Activated T-helper 1 cell treated with anti-CD3 and anti-CD28 coated beads, Interleukin-12 subunit alpha, Interleukin-12 subunit beta, Interleukin-2, Interleukin-4 antibody, amounts not matched to agents 30 ng/mL and 10 ng/mL and 1 ng/mL, durations not matched to agents 14 hours and 24 hours and 36 hours (primary cell): ENCODE measurements at regions of chrX and their contacts with region 1.

Region 1: GRCh38 chrX:97399400-97399799 is 515.7 kb downstream of the RPA4 start:
- DNase-seq: no peak
- H3K4me3 Mint-ChIP-seq: peak overlapping the region; percentile 33
- H3K27ac Mint-ChIP-seq: peak overlapping the region; percentile 86
- H3K4me1 Mint-ChIP-seq: peaks cover 50% of the 10 kb centered on the region
- H3K27me3 Mint-ChIP-seq: no peaks in the 10 kb centered on the region

Region 2: GRCh38 chrX:97026406-97026805 is 373.0 kb before region 1 on chrX:
- intact Hi-C with region 1: loop called (anchors 5 kb)
- DNase-seq: no peak
- H3K4me3 Mint-ChIP-seq: no peak overlapping the region
- H3K27ac Mint-ChIP-seq: no peak overlapping the region
- H3K4me1 Mint-ChIP-seq: no peaks in the 10 kb centered on the region
- H3K27me3 Mint-ChIP-seq: no peaks in the 10 kb centered on the region

Region 3: DNA sequence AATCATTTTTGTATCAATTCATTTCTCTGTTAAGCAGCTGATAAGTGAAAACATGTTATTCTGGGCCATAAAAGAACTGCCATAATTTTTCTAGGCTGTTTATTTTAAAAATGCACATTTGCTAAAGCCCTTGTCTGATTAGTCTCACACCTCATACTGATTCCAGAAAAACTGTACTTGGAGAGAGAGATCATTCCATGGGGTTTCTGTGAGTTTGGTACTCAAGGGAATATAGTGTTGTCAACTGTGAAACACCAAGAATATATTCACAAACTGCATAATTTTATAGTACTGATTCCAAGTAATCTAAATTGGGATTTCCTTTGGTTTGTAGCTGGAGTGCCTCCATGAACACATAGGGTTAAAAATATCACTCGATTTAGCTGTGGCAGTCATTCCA is 31.9 kb after region 1 on chrX:
- intact Hi-C with region 1: loop called (anchors 5 kb)
- DNase-seq: no peak
- H3K4me3 Mint-ChIP-seq: no peak overlapping the region
- H3K27ac Mint-ChIP-seq: no peak overlapping the region
- H3K4me1 Mint-ChIP-seq: no peaks in the 10 kb centered on the region
- H3K27me3 Mint-ChIP-seq: no peaks in the 10 kb centered on the region

Region 4: GRCh38 chrX:97494756-97495372 is 95.5 kb after region 1 on chrX:
- intact Hi-C with region 1: loop called (anchors 1 kb)
- DNase-seq: no peak
- H3K4me3 Mint-ChIP-seq: no peak overlapping the region
- H3K27ac Mint-ChIP-seq: no peak overlapping the region
- H3K4me1 Mint-ChIP-seq: no peaks in the 10 kb centered on the region
- H3K27me3 Mint-ChIP-seq: no peaks in the 10 kb centered on the region

Region 5: GRCh38 chrX:97597954-97598353 is 198.6 kb after region 1 on chrX:
- intact Hi-C with region 1: loop called (anchors 5 kb)
- DNase-seq: peak; percentile 0
- H3K4me3 Mint-ChIP-seq: peak overlapping the region; percentile 39
- H3K27ac Mint-ChIP-seq: peak overlapping the region; percentile 80
- H3K4me1 Mint-ChIP-seq: peaks cover 16% of the 10 kb centered on the region
- H3K27me3 Mint-ChIP-seq: no peaks in the 10 kb centered on the region